Natural killer cell (primary cell): ENCODE measurements at regions of chr13 and their contacts with region 1.

Region 1: GRCh38 chr13:102773441-102774215 is at the start of gene TEX30:
- DNase-seq: peak; percentile 88 to 93
- ATAC-seq: peak; percentile 91 to 98 (median 92)
- H3K4me3 ChIP-seq: peak within 1 kb of the TSS; percentile 83
- H3K4me3 Mint-ChIP-seq: peak within 1 kb of the TSS; percentile 93
- H3K27ac ChIP-seq: peak within 1 kb of the TSS; percentile 86
- H3K27ac Mint-ChIP-seq: peak within 1 kb of the TSS; percentile 90 to 96
- H3K4me1 ChIP-seq: peaks cover 30% of the 10 kb centered on the region
- H3K4me1 Mint-ChIP-seq: peaks cover 38 to 46% of the 10 kb centered on the region in 2 donors
- H3K27me3 ChIP-seq: no peaks in the 10 kb centered on the region
- H3K27me3 Mint-ChIP-seq: no peaks in the 10 kb centered on the region
- CTCF ChIP-seq: no peak
- total RNA-seq, gene TEX30: 8.7 to 10.3 (median 9.3) TPM

Region 2: DNA sequence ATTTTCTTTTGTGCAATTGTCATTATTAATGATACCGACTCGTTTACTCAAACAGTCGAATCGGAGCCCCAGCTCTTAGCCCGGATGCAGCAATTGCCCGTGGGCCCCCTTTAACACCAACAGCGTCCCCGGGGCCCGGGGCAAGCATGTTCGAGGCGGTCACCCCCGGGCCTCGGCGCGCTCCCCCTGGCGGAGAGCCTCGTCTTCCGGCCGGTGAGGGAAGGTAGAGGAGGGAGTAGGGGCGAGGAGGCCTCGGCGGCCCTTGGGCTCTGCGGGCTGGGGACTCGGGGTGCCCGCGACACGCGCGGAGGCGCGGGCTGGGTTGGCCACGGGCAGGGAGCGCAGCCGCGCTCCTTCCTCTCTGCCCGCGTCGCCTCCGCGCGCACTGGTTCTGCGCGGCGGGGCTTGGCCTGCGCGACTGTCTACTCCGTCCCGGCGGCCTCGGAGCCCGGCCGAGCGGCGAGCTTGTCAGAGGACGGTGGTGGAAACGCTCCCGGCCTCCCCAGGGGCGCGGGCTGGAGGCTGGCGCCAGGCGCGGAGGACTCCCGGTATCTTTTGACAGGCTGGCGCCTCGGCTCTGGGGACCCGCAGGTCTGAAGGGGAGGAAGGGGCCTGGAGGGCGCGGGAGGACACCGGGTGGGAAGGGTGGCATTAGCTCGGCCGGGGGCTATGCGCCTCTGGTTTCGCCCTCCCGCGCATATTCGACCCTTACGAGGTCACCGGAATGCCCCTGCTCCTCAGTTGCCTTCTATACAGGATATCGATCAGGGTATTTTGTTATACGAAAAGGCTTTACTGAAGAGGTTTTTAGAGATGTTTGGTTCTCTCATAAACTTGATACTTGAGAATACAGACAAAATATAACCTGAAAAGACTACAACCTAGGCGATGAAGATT is 26.8 kb after region 1 on chr13:
- intact Hi-C with region 1: loop called (anchors 1 kb)
- DNase-seq: peak; percentile 82 to 87
- ATAC-seq: peak; percentile 85 to 91 (median 86)
- H3K4me3 ChIP-seq: peak overlapping the region; percentile 50
- H3K4me3 Mint-ChIP-seq: peak overlapping the region; percentile 96
- H3K27ac ChIP-seq: peak overlapping the region; percentile 47
- H3K27ac Mint-ChIP-seq: peak overlapping the region; percentile 79 to 88
- H3K4me1 ChIP-seq: peaks cover 21% of the 10 kb centered on the region
- H3K4me1 Mint-ChIP-seq: peaks cover 30 to 42% of the 10 kb centered on the region in 2 donors
- H3K27me3 ChIP-seq: peaks cover 2% of the 10 kb centered on the region
- H3K27me3 Mint-ChIP-seq: peaks cover 0 to 3% of the 10 kb centered on the region in 2 donors
- CTCF ChIP-seq: peak; percentile 82